Heart right ventricle (tissue), 16 donors: ENCODE measurements at regions of chr15 and their contacts with region 1.

Region 1: GRCh38 chr15:77024271-77025082 is 29.6 kb downstream of the PSTPIP1 start:
- DNase-seq: peak; percentile 63 to 79
- ATAC-seq: peak; percentile 38 to 77 (median 54)
- H3K4me3 ChIP-seq: no peak overlapping the region
- H3K27ac ChIP-seq: no peak overlapping the region
- H3K4me1 ChIP-seq: peaks cover 0 to 38% (median 9%) of the 10 kb centered on the region in 9 donors
- H3K27me3 ChIP-seq: peaks cover 0 to 10% (median 0%) of the 10 kb centered on the region in 7 donors
- CTCF ChIP-seq: peak; percentile 93 to 98 (median 97)

Region 2: GRCh38 chr15:76973362-76973743 is 51.1 kb before region 1 on chr15:
- intact Hi-C with region 1: loop called in 4 of 10 experiments (anchors 5 to 10 kb)
- DNase-seq: peak in 1 of 2 donors; percentile 63
- ATAC-seq: peak; percentile 32 to 87 (median 70)
- H3K4me3 ChIP-seq: peak overlapping the region in 5 of 10 donors; percentile 7 to 45 (median 39)
- H3K27ac ChIP-seq: peak overlapping the region in 7 of 10 donors; percentile 24 to 83 (median 68)
- H3K4me1 ChIP-seq: peaks cover 5 to 28% (median 15%) of the 10 kb centered on the region in 9 donors
- H3K27me3 ChIP-seq: no peaks in the 10 kb centered on the region
- CTCF ChIP-seq: peak; percentile 14 to 77 (median 59)

Region 3: GRCh38 chr15:77107531-77108355 is 83.3 kb after region 1 on chr15:
- intact Hi-C with region 1: loop called in 1 of 10 experiments (anchors 5 kb)
- DNase-seq: peak; percentile 51 to 65
- ATAC-seq: peak; percentile 46 to 82 (median 76)
- H3K4me3 ChIP-seq: no peak overlapping the region
- H3K27ac ChIP-seq: peak overlapping the region in 8 of 10 donors; percentile 4 to 73 (median 61)
- H3K4me1 ChIP-seq: peaks cover 20 to 74% (median 36%) of the 10 kb centered on the region in 9 donors
- H3K27me3 ChIP-seq: no peaks in the 10 kb centered on the region
- CTCF ChIP-seq: peak; percentile 39 to 77 (median 62)

Region 4: DNA sequence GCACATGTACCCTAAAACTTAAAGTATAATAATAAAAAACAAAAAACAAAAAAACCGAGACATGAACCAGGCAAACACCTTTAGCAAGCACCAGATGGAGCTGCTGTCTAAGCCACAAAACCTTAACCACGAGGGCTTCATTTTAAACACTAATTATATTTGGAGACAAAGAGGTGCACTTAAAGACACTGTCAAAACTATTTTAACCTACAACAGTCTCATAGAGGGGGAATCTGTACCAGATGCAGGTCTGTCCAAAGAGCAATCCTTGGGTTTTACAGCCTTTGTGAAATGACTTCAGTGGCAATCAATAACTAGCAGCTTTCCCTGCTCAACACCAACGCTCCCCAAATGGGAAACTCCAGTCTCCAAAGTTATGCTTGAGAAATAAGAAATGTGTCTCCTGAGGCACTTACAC is 162.1 kb after region 1 on chr15:
- intact Hi-C with region 1: loop called in 1 of 10 experiments (anchors 10 kb)
- DNase-seq: no peak
- ATAC-seq: peak in 7 of 8 donors; percentile 33 to 64 (median 43)
- H3K4me3 ChIP-seq: no peak overlapping the region
- H3K27ac ChIP-seq: peak overlapping the region; percentile 38 to 93 (median 80)
- H3K4me1 ChIP-seq: peaks cover 5 to 70% (median 55%) of the 10 kb centered on the region in 9 donors
- H3K27me3 ChIP-seq: no peaks in the 10 kb centered on the region
- CTCF ChIP-seq: peak; percentile 38 to 81 (median 63)

Region 5: GRCh38 chr15:77430213-77430612 is 405.7 kb after region 1 on chr15:
- intact Hi-C with region 1: no loop called
- DNase-seq: no peak
- ATAC-seq: no peak
- H3K4me3 ChIP-seq: no peak overlapping the region
- H3K27ac ChIP-seq: no peak overlapping the region
- H3K4me1 ChIP-seq: peaks cover 0 to 23% (median 5%) of the 10 kb centered on the region in 9 donors
- H3K27me3 ChIP-seq: no peaks in the 10 kb centered on the region
- CTCF ChIP-seq: no peak